ENCODE measurements at regions of chr3 and their contacts with region 1.

Region 1: DNA sequence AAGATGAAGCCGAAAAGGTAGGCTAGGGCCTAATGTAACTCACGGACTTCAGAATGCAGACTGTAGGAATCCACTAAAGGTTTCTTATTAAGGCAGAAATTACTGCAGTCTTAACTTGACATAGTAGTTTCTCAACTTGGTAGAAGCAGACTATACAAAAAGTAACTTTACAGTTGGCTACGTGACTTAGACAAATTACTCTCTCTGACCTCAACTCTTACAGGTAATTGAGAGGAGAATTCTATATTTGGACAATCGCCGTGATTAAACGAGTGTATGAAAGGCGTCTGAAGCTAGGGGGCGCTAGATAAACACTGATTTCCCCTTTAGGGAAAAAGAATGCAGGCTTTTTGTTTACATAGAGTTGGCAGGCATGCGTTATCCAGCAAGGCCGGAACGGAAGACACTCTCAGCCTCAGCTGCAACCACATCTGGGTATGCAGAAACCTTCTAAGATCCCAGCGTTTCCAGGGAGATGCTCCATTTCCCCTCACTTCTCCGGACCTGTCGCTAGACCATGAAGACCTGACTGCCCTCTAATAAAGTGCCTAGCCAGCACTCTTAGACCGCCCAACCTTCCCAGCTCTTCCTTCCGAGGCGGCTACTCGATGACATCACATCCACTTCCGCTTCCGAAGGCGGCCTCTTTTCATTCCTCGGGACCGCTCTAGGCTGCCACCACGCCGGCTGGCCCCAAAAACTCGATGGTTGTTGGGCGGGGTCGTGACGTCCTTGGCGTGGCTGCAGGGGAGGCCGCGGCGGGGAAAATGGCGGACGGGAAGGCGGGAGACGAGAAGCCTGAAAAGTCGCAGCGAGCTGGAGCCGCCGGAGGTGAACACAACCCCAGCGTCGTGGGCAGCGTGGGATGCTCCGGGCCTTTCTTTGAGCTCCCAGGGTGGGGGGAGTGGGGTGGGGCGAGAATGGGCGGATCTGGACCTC is at the start of gene PCNP:
- DNase-seq: peak; percentile 92
- H3K4me3 ChIP-seq: peak within 1 kb of the TSS; percentile 85
- H3K27me3 ChIP-seq: no peaks in the 10 kb centered on the region
- CTCF ChIP-seq: peak; percentile 83
- polyA plus RNA-seq, gene PCNP: 25.9 and 56.3 TPM in 2 replicates

Region 2: GRCh38 chr3:101561630-101562328 is 11.9 kb before region 1 on chr3 and contains the start of gene TRMT10C:
- CTCF ChIA-PET with region 1: interaction called, 25 read pairs
- POLR2A ChIA-PET with region 1: no interaction called
- DNase-seq: peak; percentile 62
- H3K4me3 ChIP-seq: peak within 1 kb of the TSS; percentile 60
- H3K27me3 ChIP-seq: no peaks in the 10 kb centered on the region
- CTCF ChIP-seq: no peak
- polyA plus RNA-seq, gene TRMT10C: 7.4 and 13.4 TPM in 2 replicates

Region 3: GRCh38 chr3:101611023-101611422 is 37.3 kb after region 1 on chr3:
- CTCF ChIA-PET with region 1: no interaction called
- POLR2A ChIA-PET with region 1: no interaction called
- DNase-seq: no peak
- H3K4me3 ChIP-seq: no peak overlapping the region
- H3K27me3 ChIP-seq: no peaks in the 10 kb centered on the region
- CTCF ChIP-seq: no peak

Region 4: GRCh38 chr3:101890716-101891115 is 317.0 kb after region 1 on chr3:
- CTCF ChIA-PET with region 1: no interaction called
- POLR2A ChIA-PET with region 1: no interaction called
- DNase-seq: peak; percentile 61
- H3K4me3 ChIP-seq: no peak overlapping the region
- H3K27me3 ChIP-seq: no peaks in the 10 kb centered on the region
- CTCF ChIP-seq: no peak